PC-9 (cell line): ENCODE measurements at regions of chr4 and their contacts with region 1.

Region 1: GRCh38 chr4:41882625-41883347 is 52.4 kb upstream of the TMEM33 start:
- DNase-seq: peak in 1 of 2 experiments; percentile 44
- H3K4me3 ChIP-seq: peak overlapping the region; percentile 57
- H3K27ac ChIP-seq: no peak overlapping the region
- H3K4me1 ChIP-seq: no peaks in the 10 kb centered on the region; the same call in 1 of the 2 replicates
- H3K27me3 ChIP-seq: peaks cover 8% of the 10 kb centered on the region
- CTCF ChIP-seq: peak; percentile 87

Region 2: GRCh38 chr4:40908702-40909362 is 974.0 kb before region 1 on chr4:
- CTCF ChIA-PET with region 1: no interaction called
- POLR2A ChIA-PET with region 1: no interaction called
- intact Hi-C with region 1: loop called (anchors 10 kb)
- DNase-seq: peak; percentile 41 to 80
- H3K4me3 ChIP-seq: no peak overlapping the region
- H3K27ac ChIP-seq: no peak overlapping the region
- H3K4me1 ChIP-seq: peaks cover 10% of the 10 kb centered on the region; the same call in 1 of the 2 replicates
- H3K27me3 ChIP-seq: no peaks in the 10 kb centered on the region
- CTCF ChIP-seq: peak; percentile 92

Region 3: GRCh38 chr4:41281038-41281634 is 601.6 kb before region 1 on chr4:
- CTCF ChIA-PET with region 1: no interaction called
- POLR2A ChIA-PET with region 1: no interaction called
- intact Hi-C with region 1: loop called (anchors 1 kb)
- DNase-seq: peak; percentile 48 to 72
- H3K4me3 ChIP-seq: no peak overlapping the region
- H3K27ac ChIP-seq: no peak overlapping the region
- H3K4me1 ChIP-seq: peaks cover 23% of the 10 kb centered on the region
- H3K27me3 ChIP-seq: no peaks in the 10 kb centered on the region
- CTCF ChIP-seq: peak; percentile 91

Region 4: GRCh38 chr4:41597494-41597893 is 285.3 kb before region 1 on chr4:
- CTCF ChIA-PET with region 1: interaction called, 12 read pairs
- POLR2A ChIA-PET with region 1: no interaction called
- intact Hi-C with region 1: no loop called
- DNase-seq: no peak
- H3K4me3 ChIP-seq: no peak overlapping the region
- H3K27ac ChIP-seq: no peak overlapping the region
- H3K4me1 ChIP-seq: peaks cover 46% of the 10 kb centered on the region
- H3K27me3 ChIP-seq: no peaks in the 10 kb centered on the region
- CTCF ChIP-seq: no peak

Region 5: DNA sequence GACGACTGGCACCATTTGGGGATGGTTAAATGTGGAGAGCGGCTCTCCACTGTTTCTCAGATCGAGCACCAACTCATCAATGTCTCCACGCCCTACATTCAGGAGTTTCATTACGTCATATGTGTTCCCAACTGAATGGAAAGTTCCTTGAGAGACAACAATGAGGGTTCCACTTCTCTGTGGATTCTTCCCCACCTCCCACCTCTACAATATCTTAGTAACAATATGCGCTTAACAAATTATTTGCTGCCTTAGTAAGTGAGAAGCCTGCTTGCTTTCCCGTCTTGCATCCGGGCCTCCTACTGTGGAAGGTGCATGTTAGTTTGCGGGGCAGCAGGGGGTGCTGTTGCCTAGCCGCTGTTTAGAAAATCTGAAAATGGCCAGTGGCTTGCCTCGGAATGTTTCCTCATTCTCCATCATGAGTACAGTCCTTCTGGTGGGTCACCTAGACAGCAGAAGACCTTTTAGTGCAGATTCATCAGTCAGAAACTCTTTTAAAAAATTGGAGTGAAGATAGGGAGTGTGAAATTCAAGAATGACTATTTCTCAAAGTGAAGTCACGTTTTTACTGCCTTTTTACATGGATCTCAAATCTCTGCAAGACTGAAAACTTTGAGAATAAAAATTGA is 190.0 kb before region 1 on chr4:
- CTCF ChIA-PET with region 1: interaction called, 4 read pairs
- POLR2A ChIA-PET with region 1: no interaction called
- intact Hi-C with region 1: loop called (anchors 2 kb)
- DNase-seq: peak in 1 of 2 experiments; percentile 34
- H3K4me3 ChIP-seq: no peak overlapping the region
- H3K27ac ChIP-seq: no peak overlapping the region
- H3K4me1 ChIP-seq: no peaks in the 10 kb centered on the region
- H3K27me3 ChIP-seq: no peaks in the 10 kb centered on the region
- CTCF ChIP-seq: peak; percentile 83